Activated CD8-positive, alpha-beta T cell treated with anti-CD3 and anti-CD28 coated beads, Interleukin-2, amount 10 ng/mL, durations not matched to agents 7 days and 5 days (primary cell): ENCODE measurements at regions of chr1 and their contacts with region 1.

Region 1: DNA sequence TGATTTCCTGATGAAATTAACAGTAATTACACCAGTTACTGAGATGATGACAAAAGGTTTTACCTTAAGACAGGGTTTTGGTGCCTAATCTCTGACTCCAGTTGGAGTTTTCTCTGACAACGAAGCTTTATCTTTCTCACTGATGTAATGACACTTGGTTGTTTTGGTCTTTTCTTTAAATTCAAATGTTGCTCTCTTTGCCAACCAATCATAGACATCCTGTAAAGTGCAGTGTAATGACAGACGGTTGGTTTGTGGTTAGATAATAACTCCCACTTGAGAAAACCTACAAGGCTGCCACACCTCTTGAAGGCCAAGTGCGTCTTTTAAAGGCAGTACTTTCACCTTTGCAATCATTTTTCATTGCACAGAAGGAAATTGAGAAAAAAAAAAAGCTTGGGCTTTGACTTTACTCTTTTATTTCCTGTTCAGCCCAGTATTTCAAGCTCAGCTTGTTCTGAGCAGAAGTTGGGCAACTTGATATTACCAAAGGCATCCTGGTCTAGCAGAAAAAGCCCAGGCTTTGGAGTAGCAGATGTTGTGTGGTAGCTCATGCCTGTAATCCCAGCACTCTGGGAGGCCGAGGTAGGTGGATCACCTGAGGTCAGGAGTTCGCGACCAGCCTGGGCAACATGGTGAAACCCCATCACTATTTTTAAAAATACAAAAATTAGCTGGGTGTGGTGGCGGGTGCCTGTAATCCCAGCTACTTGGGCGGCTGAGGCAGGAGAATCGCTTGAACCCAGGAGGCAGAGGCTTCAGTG is 14.9 kb downstream of the PDIK1L start:
- DNase-seq: peak; percentile 83
- ATAC-seq: peak; percentile 98
- H3K4me3 Mint-ChIP-seq: peak overlapping the region; percentile 76
- H3K27ac Mint-ChIP-seq: peak overlapping the region; percentile 94
- H3K4me1 Mint-ChIP-seq: peaks cover 66% of the 10 kb centered on the region
- H3K27me3 Mint-ChIP-seq: no peaks in the 10 kb centered on the region

Region 2: GRCh38 chr1:25904943-25905679 is 221.4 kb before region 1 on chr1:
- CTCF ChIA-PET with region 1: no interaction called
- POLR2A ChIA-PET with region 1: interaction called, 12 read pairs
- DNase-seq: peak; percentile 99
- ATAC-seq: peak; percentile 85
- H3K4me3 Mint-ChIP-seq: peak overlapping the region; percentile 93
- H3K27ac Mint-ChIP-seq: peak overlapping the region; percentile 96
- H3K4me1 Mint-ChIP-seq: peaks cover 46% of the 10 kb centered on the region
- H3K27me3 Mint-ChIP-seq: peaks cover 21% of the 10 kb centered on the region

Region 3: DNA sequence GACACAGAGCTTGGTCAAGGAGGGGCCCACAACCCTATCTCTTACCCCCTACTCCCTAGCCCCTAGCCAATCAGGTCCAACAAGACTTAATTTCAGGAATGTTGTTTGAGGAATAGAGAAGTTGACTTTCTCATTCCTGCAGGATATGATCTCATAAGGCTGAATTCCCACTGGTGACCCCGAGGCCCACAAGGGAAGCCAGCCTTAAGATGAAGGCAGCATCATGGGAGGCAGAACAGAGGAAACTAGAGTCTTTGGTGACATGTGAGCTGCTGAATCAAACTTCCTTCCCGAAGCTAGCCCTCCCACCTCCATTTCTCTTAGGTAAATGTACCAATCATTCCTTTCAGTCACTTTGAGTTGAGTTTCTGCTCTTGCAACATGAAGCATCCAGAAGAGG is 24.0 kb before region 1 on chr1:
- CTCF ChIA-PET with region 1: interaction called, 13 read pairs
- POLR2A ChIA-PET with region 1: interaction called, 5 read pairs
- DNase-seq: no peak
- ATAC-seq: no peak
- H3K4me3 Mint-ChIP-seq: no peak overlapping the region
- H3K27ac Mint-ChIP-seq: no peak overlapping the region
- H3K4me1 Mint-ChIP-seq: peaks cover 14% of the 10 kb centered on the region
- H3K27me3 Mint-ChIP-seq: peaks cover 11% of the 10 kb centered on the region

Region 4: GRCh38 chr1:26111530-26112406 is 14.7 kb before region 1 on chr1 and contains the start of gene PDIK1L:
- CTCF ChIA-PET with region 1: interaction called, 69 read pairs
- POLR2A ChIA-PET with region 1: interaction called, 93 read pairs
- DNase-seq: peak; percentile 95
- ATAC-seq: peak; percentile 86
- H3K4me3 Mint-ChIP-seq: peak within 1 kb of the TSS; percentile 95
- H3K27ac Mint-ChIP-seq: peak within 1 kb of the TSS; percentile 91
- H3K4me1 Mint-ChIP-seq: peaks cover 30% of the 10 kb centered on the region
- H3K27me3 Mint-ChIP-seq: no peaks in the 10 kb centered on the region
- total RNA-seq, gene PDIK1L: 21.3 to 25.4 TPM

Region 5: DNA sequence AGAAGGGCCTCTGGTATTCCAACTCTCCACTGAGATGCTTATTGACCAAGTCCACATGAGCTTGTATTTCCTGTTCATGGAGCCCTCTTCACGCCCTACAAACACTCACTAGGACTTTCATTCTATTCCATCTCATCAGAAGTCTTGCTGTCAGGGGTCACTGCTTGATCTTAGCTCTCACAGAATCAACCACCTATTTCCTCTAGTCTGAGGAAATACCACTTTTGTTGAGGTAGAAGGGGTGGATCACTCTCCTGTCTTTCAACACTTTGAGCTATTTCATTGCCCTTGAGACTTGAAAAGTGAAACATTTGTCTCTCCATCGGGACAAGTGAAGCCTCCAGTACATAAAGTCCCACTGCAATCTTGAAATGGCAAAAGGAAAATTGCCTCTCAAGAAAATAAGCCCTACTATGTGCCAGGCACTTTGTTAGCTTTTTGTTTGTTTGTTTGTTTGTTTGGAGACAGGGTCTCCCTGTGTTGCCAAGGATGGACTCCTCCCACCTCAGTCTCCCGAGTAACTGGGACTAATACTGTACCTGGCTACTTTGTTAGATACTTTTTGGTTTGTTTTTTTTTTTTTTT is 12.6 kb after region 1 on chr1:
- CTCF ChIA-PET with region 1: interaction called, 317 read pairs
- POLR2A ChIA-PET with region 1: interaction called, 52 read pairs
- DNase-seq: peak; percentile 38
- ATAC-seq: peak; percentile 92
- H3K4me3 Mint-ChIP-seq: peak overlapping the region; percentile 40
- H3K27ac Mint-ChIP-seq: peak overlapping the region; percentile 77
- H3K4me1 Mint-ChIP-seq: peaks cover 15% of the 10 kb centered on the region
- H3K27me3 Mint-ChIP-seq: peaks cover 7% of the 10 kb centered on the region